OCI-LY7 (cell line): ENCODE measurements at regions of chr14 and their contacts with region 1.

Region 1: DNA sequence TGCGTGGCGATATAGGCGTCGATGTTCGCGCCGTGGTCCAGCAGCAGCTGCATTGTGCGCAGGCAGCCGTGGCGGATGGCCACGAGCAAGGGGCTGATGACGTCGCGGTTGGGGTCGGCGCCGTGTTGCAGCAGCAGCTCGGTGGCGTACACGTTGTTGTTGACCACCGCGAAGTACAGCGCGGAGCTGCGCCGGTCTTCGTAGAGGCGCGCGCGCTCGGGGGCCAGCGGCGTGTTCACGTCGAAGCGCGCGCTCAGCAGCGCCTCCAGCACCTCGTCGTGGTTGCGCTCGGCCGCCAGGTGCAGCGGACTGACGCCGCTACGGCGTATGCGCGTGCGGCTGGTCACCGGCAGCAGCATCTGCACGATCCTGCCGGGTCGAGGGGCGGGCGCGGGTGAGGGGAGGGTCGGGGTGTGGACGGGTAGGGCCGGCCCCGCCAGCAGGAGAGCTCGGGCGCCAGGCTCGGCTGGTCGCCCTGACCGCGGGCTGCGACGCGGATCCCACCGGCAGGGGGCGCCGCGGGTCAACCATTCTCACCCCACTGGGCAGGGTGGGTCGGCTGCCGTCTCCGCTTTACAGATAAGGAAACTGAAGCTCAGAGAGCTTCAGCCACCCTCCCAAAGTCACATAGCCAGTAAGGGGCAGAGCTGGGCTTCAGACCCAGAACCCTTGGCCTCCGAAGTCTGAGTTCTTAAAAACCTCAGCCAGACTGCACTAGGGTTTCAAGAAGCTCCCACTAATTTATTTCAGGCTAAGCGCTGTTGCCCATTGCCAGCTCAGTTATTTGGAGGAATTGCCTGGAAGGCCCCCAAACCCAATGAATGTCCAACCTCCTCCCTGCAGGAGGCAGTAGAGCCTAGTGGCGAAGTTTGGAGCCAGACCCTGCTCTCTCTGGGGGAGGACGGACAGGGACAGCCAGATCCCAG is 12.4 kb downstream of the FAM181A start:
- DNase-seq: peak; percentile 81
- H3K4me3 ChIP-seq: no peak overlapping the region
- H3K27ac ChIP-seq: no peak overlapping the region
- H3K4me1 ChIP-seq: peaks cover 6% of the 10 kb centered on the region
- CTCF ChIP-seq: peak; percentile 86

Region 2: DNA sequence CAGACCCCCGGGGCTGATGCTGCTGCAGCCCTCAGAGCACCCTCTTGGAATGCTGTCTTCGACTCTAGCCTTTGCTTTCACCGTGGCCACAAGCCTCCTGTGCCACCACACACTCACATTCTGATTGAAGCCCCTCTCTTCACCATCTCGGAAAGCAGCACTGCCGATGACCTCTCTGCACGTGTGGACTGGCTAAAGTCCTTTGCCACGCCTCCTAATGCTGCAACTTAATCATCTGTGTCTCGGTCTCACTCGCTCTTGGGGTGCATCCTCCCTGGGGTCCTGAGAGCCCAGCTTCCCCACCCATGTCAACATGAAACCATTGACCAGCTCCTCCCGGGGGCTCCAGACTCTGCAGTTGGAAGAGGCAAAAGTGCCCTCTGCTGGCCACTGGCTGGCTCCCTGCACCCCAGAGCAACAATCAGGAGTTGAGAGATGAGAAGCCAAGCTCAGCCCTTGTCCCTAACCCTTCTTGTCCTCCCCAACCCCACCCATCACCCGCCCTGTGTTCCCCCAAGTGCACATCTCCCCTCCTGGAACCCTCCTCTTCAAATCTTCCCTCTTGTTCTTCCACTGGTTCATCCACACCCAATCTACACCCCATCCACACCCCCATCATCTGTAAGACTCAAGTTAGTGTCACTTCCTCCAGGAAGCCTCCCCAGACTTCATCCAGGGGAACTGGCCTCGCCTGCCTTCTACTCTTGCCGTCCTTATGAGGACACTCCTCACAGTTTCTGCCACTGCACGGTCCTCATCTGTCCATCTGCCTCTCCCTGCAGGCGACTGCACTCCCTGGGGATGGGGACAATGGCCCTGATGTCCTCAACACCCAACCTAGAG is 36.0 kb before region 1 on chr14:
- CTCF ChIA-PET with region 1: no interaction called
- POLR2A ChIA-PET with region 1: no interaction called
- intact Hi-C with region 1: no loop called
- DNase-seq: no peak
- H3K4me3 ChIP-seq: no peak overlapping the region
- H3K27ac ChIP-seq: no peak overlapping the region
- H3K4me1 ChIP-seq: no peaks in the 10 kb centered on the region
- CTCF ChIP-seq: 0 out of 2 replicates have a peak, but pooled peaks have one; percentile 40

Region 3: DNA sequence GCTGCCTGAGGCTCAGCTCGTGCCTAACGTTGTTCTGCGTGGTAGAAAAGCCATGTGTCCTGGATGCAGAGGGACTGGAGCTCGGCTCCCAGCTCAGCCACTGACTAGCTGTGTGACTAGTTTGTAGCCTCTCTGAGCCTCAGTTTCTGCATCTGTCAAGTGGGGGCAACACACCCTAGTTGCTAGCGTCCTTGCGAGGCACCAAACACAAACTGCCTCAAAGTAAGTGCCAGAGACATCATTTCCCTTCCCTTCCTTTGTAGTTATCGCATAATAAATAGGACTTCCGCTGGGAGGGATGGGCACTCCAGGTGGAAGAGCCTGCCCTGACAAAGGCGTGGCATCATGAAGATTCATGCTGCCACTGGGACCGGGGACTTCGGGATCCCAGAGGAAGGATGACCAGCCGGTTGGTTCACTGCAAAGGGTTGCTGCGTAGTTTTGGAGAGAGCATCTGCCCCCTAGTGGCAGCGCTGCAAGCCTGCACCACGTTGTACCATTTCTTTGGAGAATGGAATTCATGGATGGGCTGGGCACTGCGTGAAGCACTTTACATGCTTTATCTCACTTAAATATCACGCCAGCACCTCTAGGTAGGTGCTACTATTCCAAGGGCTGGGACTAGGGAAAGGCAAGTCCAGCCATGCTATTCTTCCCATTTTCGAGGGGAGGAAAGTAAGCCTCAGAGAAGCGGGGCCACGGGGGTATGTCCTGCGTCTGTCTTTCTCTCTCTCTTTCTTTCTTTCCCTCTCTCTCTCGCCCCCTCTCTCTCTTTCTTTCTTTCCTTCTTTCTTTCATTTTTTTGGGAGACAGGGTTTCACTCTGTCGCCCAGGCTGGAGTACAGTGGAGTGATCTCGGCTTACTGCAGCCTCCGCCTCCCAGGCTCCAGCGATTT is 62.2 kb after region 1 on chr14:
- CTCF ChIA-PET with region 1: interaction called, 23 read pairs
- POLR2A ChIA-PET with region 1: interaction called, 4 read pairs
- intact Hi-C with region 1: loop called (anchors 1 kb)
- DNase-seq: peak; percentile 76
- H3K4me3 ChIP-seq: no peak overlapping the region
- H3K27ac ChIP-seq: no peak overlapping the region
- H3K4me1 ChIP-seq: peaks cover 9% of the 10 kb centered on the region
- CTCF ChIP-seq: peak; percentile 97